ENCODE measurements at regions of chr3 and their contacts with region 1.

Region 1: GRCh38 chr3:190345027-190345821 is 23.0 kb upstream of the CLDN1 start:
- DNase-seq: peak; percentile 100
- H3K4me3 ChIP-seq: peak overlapping the region in 2 of 3 experiments; percentile 6 to 25
- H3K27ac ChIP-seq: peak overlapping the region; percentile 100
- H3K4me1 ChIP-seq: peaks cover 23% of the 10 kb centered on the region
- H3K27me3 ChIP-seq: no peaks in the 10 kb centered on the region
- CTCF ChIP-seq: no peak

Region 2: GRCh38 chr3:190101320-190102011 is 243.8 kb before region 1 on chr3:
- CTCF ChIA-PET with region 1: no interaction called
- dilution Hi-C with region 1: no loop called
- in situ Hi-C with region 1: no loop called
- intact Hi-C with region 1: no loop called
- DNase-seq: no peak
- H3K4me3 ChIP-seq: no peak overlapping the region
- H3K27ac ChIP-seq: no peak overlapping the region
- H3K4me1 ChIP-seq: no peaks in the 10 kb centered on the region
- H3K27me3 ChIP-seq: no peaks in the 10 kb centered on the region
- CTCF ChIP-seq: no peak

Region 3: GRCh38 chr3:190366145-190366544 is 20.9 kb after region 1 on chr3:
- CTCF ChIA-PET with region 1: no interaction called
- dilution Hi-C with region 1: no loop called
- in situ Hi-C with region 1: no loop called
- intact Hi-C with region 1: loop called (anchors 1 kb)
- DNase-seq: peak; percentile 72
- H3K4me3 ChIP-seq: no peak overlapping the region
- H3K27ac ChIP-seq: peak overlapping the region; percentile 65
- H3K4me1 ChIP-seq: peaks cover 36% of the 10 kb centered on the region
- H3K27me3 ChIP-seq: no peaks in the 10 kb centered on the region
- CTCF ChIP-seq: no peak

Measured in mammary epithelial cell (primary cell).